Endothelial cell of umbilical vein (primary cell): ENCODE measurements at regions of chr18 and their contacts with region 1.

Region 1: DNA sequence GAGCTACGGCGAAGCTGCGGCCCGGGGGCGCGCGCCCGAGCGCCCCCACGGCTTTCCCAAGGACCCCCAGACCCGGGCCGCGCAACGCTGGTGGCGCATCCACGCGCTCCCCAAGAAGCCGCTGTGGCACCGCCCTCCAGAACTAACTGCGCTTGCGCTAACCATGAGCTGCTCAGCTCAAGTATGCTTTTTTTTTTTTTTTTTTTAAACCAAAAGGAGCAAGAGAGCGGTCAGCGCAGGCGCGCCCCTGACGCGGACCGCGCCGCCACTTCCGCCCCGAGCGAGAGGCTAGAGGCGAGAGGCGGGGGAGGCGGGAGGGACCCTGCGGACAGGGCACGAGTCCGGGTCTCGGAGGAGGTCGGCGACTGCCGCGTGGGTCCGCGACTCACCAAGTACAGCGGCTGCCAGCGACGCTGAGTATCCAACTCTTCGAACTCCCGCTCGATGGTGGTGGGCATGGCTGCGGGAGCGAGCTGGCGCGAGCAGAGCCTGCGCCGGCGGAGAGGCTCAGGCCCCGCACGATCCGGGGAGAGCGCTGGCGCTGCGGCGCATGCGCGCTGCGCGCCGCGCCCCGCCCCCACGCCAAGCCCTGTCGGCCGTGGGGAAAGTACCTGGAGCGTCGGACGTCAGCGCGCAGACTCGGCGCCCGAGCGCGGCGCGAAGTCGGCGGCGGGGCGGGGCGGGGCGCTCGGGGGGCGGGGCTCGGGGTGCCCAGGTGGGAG is at the start of gene PTPN2:
- DNase-seq: peak; percentile 95
- H3K4me3 ChIP-seq: peak within 1 kb of the TSS; percentile 72 to 92 (median 74)
- H3K27ac ChIP-seq: peak within 1 kb of the TSS; percentile 97
- H3K4me1 ChIP-seq: peaks cover 6% of the 10 kb centered on the region
- H3K27me3 ChIP-seq: no peaks in the 10 kb centered on the region
- CTCF ChIP-seq: no peak
- POLR2A ChIP-seq: peak; percentile 96
- total RNA-seq, gene PTPN2: 20.9 and 21.7 TPM in 2 replicates

Region 2: DNA sequence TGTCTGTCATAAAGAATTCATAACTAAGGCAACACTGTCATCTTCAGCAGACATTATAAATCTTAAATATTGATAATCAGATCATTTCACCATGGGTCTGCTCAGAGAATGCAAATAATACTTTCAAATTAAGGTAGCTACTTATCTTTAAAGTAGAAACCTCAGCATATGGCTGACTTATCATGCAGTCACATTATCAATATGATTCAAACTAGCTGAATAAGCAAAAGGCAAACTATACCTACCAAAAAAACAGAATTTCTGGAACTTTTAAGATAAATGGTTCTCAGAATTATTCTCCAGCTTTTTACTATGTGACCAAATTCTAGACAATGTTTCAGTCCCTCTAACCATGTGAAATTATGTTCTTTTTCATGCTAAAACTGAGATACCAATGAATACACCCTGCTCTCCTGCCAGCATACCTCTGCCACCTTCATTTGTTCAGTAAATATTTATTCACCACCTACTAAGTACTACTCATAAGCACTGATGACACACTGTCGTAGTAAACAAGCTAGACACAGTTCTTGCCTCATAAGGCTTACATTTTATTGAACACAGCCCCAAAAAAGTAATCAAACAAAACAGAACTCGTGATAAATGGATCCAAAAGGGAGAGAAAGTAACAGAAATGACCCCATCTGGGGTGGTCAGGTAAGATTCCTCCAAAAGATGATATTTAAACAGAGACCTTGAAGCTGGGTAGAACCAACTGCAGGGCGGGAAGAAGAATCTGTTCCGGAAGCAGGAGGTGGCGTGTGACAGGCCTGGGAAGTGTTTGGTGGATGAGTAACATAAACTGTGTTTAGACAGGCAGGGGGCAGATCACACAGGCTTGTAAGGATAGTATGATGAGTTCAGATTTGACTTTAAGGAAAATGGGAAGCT is 243.6 kb before region 1 on chr18:
- CTCF ChIA-PET with region 1: no interaction called
- POLR2A ChIA-PET with region 1: no interaction called
- dilution Hi-C with region 1: no loop called
- intact Hi-C with region 1: no loop called
- DNase-seq: peak; percentile 82
- H3K4me3 ChIP-seq: no peak overlapping the region
- H3K27ac ChIP-seq: peak overlapping the region; percentile 75
- H3K4me1 ChIP-seq: peaks cover 22% of the 10 kb centered on the region
- H3K27me3 ChIP-seq: no peaks in the 10 kb centered on the region
- CTCF ChIP-seq: no peak
- POLR2A ChIP-seq: no peak

Region 3: GRCh38 chr18:12828116-12829051 is 55.5 kb before region 1 on chr18:
- CTCF ChIA-PET with region 1: no interaction called
- POLR2A ChIA-PET with region 1: no interaction called
- dilution Hi-C with region 1: no loop called
- intact Hi-C with region 1: loop called (anchors 2 kb)
- DNase-seq: peak; percentile 57
- H3K4me3 ChIP-seq: peak overlapping the region in 1 of 3 experiments; percentile 15
- H3K27ac ChIP-seq: peak overlapping the region; percentile 23
- H3K4me1 ChIP-seq: peaks cover 13% of the 10 kb centered on the region
- H3K27me3 ChIP-seq: no peaks in the 10 kb centered on the region
- CTCF ChIP-seq: no peak
- POLR2A ChIP-seq: no peak

Region 4: GRCh38 chr18:12872408-12872807 is 11.4 kb before region 1 on chr18:
- CTCF ChIA-PET with region 1: no interaction called
- POLR2A ChIA-PET with region 1: no interaction called
- dilution Hi-C with region 1: no loop called
- intact Hi-C with region 1: no loop called
- DNase-seq: no peak
- H3K4me3 ChIP-seq: no peak overlapping the region
- H3K27ac ChIP-seq: no peak overlapping the region
- H3K4me1 ChIP-seq: no peaks in the 10 kb centered on the region
- H3K27me3 ChIP-seq: no peaks in the 10 kb centered on the region
- CTCF ChIP-seq: no peak
- POLR2A ChIP-seq: no peak

Region 5: GRCh38 chr18:12904012-12904516 is 20.2 kb after region 1 on chr18:
- CTCF ChIA-PET with region 1: interaction called, 3 read pairs
- POLR2A ChIA-PET with region 1: interaction called, 11 read pairs
- dilution Hi-C with region 1: no loop called
- intact Hi-C with region 1: no loop called
- DNase-seq: no peak
- H3K4me3 ChIP-seq: no peak overlapping the region
- H3K27ac ChIP-seq: no peak overlapping the region
- H3K4me1 ChIP-seq: peaks cover 10% of the 10 kb centered on the region
- H3K27me3 ChIP-seq: peaks cover 21 to 22% of the 10 kb centered on the region in 2 experiments
- CTCF ChIP-seq: no peak
- POLR2A ChIP-seq: no peak